ENCODE measurements at regions of chr6 and their contacts with region 1.

Region 1: GRCh38 chr6:131597446-131597845 is 24.4 kb downstream of the ARG1 start:
- DNase-seq: peak in 5 of 9 donors; percentile 8 to 30 (median 17)
- ATAC-seq: no peak
- H3K4me3 ChIP-seq: no peak overlapping the region
- H3K4me3 Mint-ChIP-seq: no peak overlapping the region
- H3K27ac ChIP-seq: no peak overlapping the region
- H3K27ac Mint-ChIP-seq: peak overlapping the region in 1 of 9 donors; percentile 51
- H3K4me1 ChIP-seq: no peaks in the 10 kb centered on the region
- H3K4me1 Mint-ChIP-seq: peaks cover 0 to 4% (median 0%) of the 10 kb centered on the region in 7 donors
- H3K27me3 ChIP-seq: no peaks in the 10 kb centered on the region
- H3K27me3 Mint-ChIP-seq: no peaks in the 10 kb centered on the region

Region 2: DNA sequence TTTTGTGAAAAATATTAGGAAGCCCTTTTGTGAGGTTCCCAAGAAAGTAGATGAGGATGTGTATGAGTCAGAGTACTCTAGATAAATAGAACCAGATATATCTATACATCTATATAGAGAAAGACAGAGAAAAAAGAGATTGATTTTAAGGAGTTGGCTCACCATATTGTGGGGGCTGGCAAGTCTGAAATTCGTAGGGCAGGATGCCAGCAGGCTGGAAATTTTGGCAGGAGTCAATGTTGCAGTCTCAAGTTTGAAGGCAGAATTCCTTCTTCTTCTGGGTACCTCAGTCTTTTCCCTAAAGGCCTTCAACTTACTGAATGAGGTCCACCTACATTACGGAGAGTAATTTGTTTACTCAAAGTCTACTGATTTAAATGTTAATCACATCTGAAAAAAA is 1309.4 kb before region 1 on chr6:
- CTCF ChIA-PET with region 1: no interaction called
- POLR2A ChIA-PET with region 1: no interaction called
- intact Hi-C with region 1: no loop called
- DNase-seq: no peak
- ATAC-seq: no peak
- H3K4me3 ChIP-seq: no peak overlapping the region
- H3K4me3 Mint-ChIP-seq: no peak overlapping the region
- H3K27ac ChIP-seq: no peak overlapping the region
- H3K27ac Mint-ChIP-seq: no peak overlapping the region
- H3K4me1 ChIP-seq: no peaks in the 10 kb centered on the region
- H3K4me1 Mint-ChIP-seq: no peaks in the 10 kb centered on the region
- H3K27me3 ChIP-seq: no peaks in the 10 kb centered on the region
- H3K27me3 Mint-ChIP-seq: peaks cover 0 to 5% (median 0%) of the 10 kb centered on the region in 5 donors

Region 3: GRCh38 chr6:131182991-131183425 is 414.4 kb before region 1 on chr6:
- CTCF ChIA-PET with region 1: no interaction called
- POLR2A ChIA-PET with region 1: no interaction called
- intact Hi-C with region 1: loop called in 1 of 2 experiments (anchors 5 kb)
- DNase-seq: peak in 8 of 9 donors; percentile 6 to 57 (median 47)
- ATAC-seq: peak; percentile 83
- H3K4me3 ChIP-seq: no peak overlapping the region
- H3K4me3 Mint-ChIP-seq: peak overlapping the region; percentile 10 to 85 (median 72)
- H3K27ac ChIP-seq: no peak overlapping the region
- H3K27ac Mint-ChIP-seq: peak overlapping the region; percentile 86 to 98 (median 94)
- H3K4me1 ChIP-seq: peaks cover 0 to 8% of the 10 kb centered on the region in 2 donors
- H3K4me1 Mint-ChIP-seq: peaks cover 5 to 22% (median 17%) of the 10 kb centered on the region in 7 donors
- H3K27me3 ChIP-seq: no peaks in the 10 kb centered on the region
- H3K27me3 Mint-ChIP-seq: no peaks in the 10 kb centered on the region

Region 4: GRCh38 chr6:131519670-131520436 is 77.6 kb before region 1 on chr6:
- CTCF ChIA-PET with region 1: interaction called, 4 read pairs
- POLR2A ChIA-PET with region 1: no interaction called
- intact Hi-C with region 1: loop called in 1 of 2 experiments (anchors 1 kb)
- DNase-seq: peak in 7 of 9 donors; percentile 38 to 64 (median 55)
- ATAC-seq: peak; percentile 92
- H3K4me3 ChIP-seq: no peak overlapping the region
- H3K4me3 Mint-ChIP-seq: no peak overlapping the region
- H3K27ac ChIP-seq: no peak overlapping the region
- H3K27ac Mint-ChIP-seq: peak overlapping the region in 6 of 9 donors; percentile 29 to 69 (median 40)
- H3K4me1 ChIP-seq: peaks cover 0 to 9% of the 10 kb centered on the region in 2 donors
- H3K4me1 Mint-ChIP-seq: peaks cover 8 to 25% (median 20%) of the 10 kb centered on the region in 7 donors
- H3K27me3 ChIP-seq: no peaks in the 10 kb centered on the region
- H3K27me3 Mint-ChIP-seq: peaks cover 0 to 8% (median 0%) of the 10 kb centered on the region in 5 donors

Region 5: GRCh38 chr6:131615275-131615674 is 17.8 kb after region 1 on chr6:
- CTCF ChIA-PET with region 1: no interaction called
- POLR2A ChIA-PET with region 1: no interaction called
- intact Hi-C with region 1: loop called in 1 of 2 experiments (anchors 2 kb)
- DNase-seq: no peak
- ATAC-seq: no peak
- H3K4me3 ChIP-seq: no peak overlapping the region
- H3K4me3 Mint-ChIP-seq: no peak overlapping the region
- H3K27ac ChIP-seq: no peak overlapping the region
- H3K27ac Mint-ChIP-seq: peak overlapping the region in 1 of 9 donors; percentile 23
- H3K4me1 ChIP-seq: no peaks in the 10 kb centered on the region
- H3K4me1 Mint-ChIP-seq: peaks cover 0 to 8% (median 2%) of the 10 kb centered on the region in 7 donors
- H3K27me3 ChIP-seq: no peaks in the 10 kb centered on the region
- H3K27me3 Mint-ChIP-seq: no peaks in the 10 kb centered on the region

Region 6: GRCh38 chr6:131694831-131695426 is 97.5 kb after region 1 on chr6:
- CTCF ChIA-PET with region 1: no interaction called
- POLR2A ChIA-PET with region 1: no interaction called
- intact Hi-C with region 1: no loop called
- DNase-seq: peak in 2 of 9 donors; percentile 3 to 8
- ATAC-seq: peak; percentile 54
- H3K4me3 ChIP-seq: no peak overlapping the region
- H3K4me3 Mint-ChIP-seq: no peak overlapping the region
- H3K27ac ChIP-seq: no peak overlapping the region
- H3K27ac Mint-ChIP-seq: no peak overlapping the region
- H3K4me1 ChIP-seq: no peaks in the 10 kb centered on the region
- H3K4me1 Mint-ChIP-seq: peaks cover 0 to 1% (median 0%) of the 10 kb centered on the region in 7 donors
- H3K27me3 ChIP-seq: no peaks in the 10 kb centered on the region
- H3K27me3 Mint-ChIP-seq: peaks cover 0 to 5% (median 0%) of the 10 kb centered on the region in 5 donors

Region 7: GRCh38 chr6:131792091-131792496 is 194.6 kb after region 1 on chr6:
- CTCF ChIA-PET with region 1: no interaction called
- POLR2A ChIA-PET with region 1: no interaction called
- intact Hi-C with region 1: no loop called
- DNase-seq: no peak
- ATAC-seq: no peak
- H3K4me3 ChIP-seq: no peak overlapping the region
- H3K4me3 Mint-ChIP-seq: no peak overlapping the region
- H3K27ac ChIP-seq: no peak overlapping the region
- H3K27ac Mint-ChIP-seq: no peak overlapping the region
- H3K4me1 ChIP-seq: no peaks in the 10 kb centered on the region
- H3K4me1 Mint-ChIP-seq: peaks cover 0 to 6% (median 0%) of the 10 kb centered on the region in 7 donors
- H3K27me3 ChIP-seq: no peaks in the 10 kb centered on the region
- H3K27me3 Mint-ChIP-seq: peaks cover 0 to 18% (median 17%) of the 10 kb centered on the region in 5 donors

Region 8: GRCh38 chr6:132445201-132445951 is 847.9 kb after region 1 on chr6:
- CTCF ChIA-PET with region 1: no interaction called
- POLR2A ChIA-PET with region 1: no interaction called
- intact Hi-C with region 1: no loop called
- DNase-seq: no peak
- ATAC-seq: no peak
- H3K4me3 ChIP-seq: no peak overlapping the region
- H3K4me3 Mint-ChIP-seq: no peak overlapping the region
- H3K27ac ChIP-seq: no peak overlapping the region
- H3K27ac Mint-ChIP-seq: no peak overlapping the region
- H3K4me1 ChIP-seq: no peaks in the 10 kb centered on the region
- H3K4me1 Mint-ChIP-seq: no peaks in the 10 kb centered on the region
- H3K27me3 ChIP-seq: no peaks in the 10 kb centered on the region
- H3K27me3 Mint-ChIP-seq: no peaks in the 10 kb centered on the region